Right ventricle myocardium inferior (tissue), 1 donor: ENCODE measurements at regions of chr10 and their contacts with region 1.

Region 1: GRCh38 chr10:77846718-77847630 is 79.6 kb downstream of the DLG5 start:
- DNase-seq: peak; percentile 86
- ATAC-seq: peak; percentile 74

Region 2: DNA sequence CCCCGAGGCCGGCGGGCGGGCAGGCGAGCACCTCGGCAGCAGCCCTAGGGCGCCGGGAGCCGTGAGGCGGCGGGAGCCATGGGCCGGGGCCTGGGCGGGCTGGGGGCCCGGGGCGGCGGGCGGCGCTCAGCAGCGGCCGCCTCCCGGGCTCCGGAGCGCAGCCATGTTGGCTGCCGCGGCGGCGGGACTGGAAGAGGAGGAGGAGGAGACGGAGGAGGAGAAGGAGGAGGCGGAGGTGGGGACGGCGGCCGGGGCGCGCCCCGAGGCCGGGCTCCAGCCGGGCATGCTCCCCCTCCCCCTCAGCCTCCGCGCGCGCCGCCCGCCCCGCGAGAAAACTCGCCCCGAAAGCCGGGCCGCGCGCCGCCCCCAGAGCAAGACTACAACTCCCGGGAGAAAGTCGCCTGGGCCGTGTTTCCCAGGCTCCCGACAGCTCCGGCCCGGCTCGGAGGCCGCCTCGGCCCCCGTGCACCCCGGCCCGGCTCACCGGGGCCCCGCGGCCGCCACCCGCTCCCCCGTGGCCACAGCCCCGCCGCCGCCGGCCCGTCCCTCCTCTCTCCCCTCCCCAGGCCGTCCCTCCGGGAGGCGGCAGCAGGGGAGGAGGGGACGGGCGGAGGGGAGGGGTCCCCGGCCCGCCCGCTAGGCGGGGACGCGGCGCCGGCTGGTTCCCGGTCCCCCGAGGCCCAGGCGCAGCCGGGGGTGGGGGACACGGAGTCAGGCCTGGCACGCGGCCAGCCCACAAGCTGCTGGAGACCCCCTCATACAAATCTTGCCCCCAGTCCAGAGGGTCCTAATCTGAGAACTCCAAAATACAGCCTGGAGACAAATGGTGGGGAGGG is 79.8 kb after region 1 on chr10 and contains the start of gene DLG5:
- intact Hi-C with region 1: loop called (anchors 2 kb)
- DNase-seq: peak; percentile 80
- ATAC-seq: peak; percentile 86
- total RNA-seq, gene DLG5: 8.9 TPM

Region 3: DNA sequence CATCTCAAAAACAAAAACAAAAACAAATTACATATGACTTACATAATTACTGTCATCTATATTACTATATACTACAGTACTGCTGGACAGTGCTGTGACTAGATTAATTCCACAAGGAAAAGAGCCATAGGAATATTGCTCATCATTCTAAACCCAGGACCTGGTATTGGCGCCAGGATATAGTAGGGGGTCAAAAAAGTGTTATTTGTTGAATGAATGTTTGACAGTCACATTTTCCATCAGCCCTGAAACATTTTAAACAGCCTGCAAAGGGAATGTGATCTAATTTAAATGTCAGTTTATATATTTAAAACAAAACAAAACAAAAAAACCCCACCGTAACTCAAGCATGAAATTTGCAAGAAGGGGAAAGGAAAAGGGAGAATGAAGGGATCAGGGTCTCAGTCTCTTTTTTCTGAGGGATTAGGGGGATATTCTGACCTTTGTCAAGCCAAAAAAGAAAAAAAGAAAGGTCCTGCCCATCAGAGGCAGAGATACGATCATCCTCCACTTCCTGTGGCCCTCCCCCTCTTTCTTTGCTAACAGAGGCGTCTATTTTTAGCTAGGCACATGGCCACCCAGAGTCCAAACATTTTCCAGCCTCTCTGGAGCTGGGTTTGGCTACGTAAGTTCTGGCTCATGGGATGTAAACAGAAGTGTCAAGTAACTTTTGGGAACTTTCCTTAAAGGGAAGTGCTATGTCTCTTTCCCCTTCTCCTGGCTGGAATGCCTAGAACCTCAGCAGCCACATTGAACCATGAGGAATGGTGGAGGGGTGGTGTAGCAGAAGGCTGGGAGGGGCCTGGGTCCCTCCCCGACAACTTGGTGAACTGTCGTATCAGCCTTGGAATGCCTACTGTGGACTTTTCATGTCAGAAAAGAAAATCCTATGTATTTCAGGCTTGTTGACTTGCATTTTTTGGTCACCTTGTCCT is 124.2 kb after region 1 on chr10:
- intact Hi-C with region 1: loop called (anchors 5 kb)
- DNase-seq: no peak
- ATAC-seq: peak; percentile 92

Region 4: DNA sequence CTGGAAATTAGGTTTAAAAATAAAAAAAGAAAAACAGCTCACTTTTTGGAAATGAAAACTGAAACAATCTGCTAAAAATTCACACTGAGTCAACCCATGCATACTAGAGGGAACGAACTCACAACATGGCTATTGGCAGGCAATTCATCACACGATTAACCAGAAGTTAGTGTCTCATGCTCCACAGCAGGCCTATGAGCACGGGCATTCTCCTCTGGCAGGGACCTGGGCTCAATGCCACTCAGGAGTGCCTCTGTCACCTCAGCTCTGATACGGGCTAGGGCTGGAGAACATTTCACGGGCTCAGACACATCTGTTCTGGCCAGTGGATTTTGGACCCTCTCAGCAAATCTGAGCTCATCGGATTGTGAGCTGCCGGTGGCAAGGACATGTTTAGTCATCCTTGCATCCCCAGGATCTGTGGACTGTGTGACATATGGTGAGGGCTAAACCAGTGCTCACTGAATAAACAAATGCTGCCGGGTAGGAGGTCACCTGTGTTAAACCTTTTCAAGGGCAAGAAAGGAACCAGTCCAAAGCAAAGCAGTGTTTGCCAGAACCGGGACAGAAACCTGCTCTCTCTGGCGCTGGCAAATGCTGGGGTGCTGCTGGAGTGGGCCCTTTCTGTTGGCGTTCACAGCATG is 142.2 kb after region 1 on chr10:
- intact Hi-C with region 1: loop called (anchors 5 kb)
- DNase-seq: no peak
- ATAC-seq: peak; percentile 96